Natural killer cell (primary cell): ENCODE measurements at regions of chr16 and their contacts with region 1.

Region 1: GRCh38 chr16:66275775-66276428 is 90.6 kb upstream of the CDH5 start:
- DNase-seq: peak in 1 of 2 donors; percentile 33
- ATAC-seq: no peak
- H3K4me3 ChIP-seq: no peak overlapping the region
- H3K4me3 Mint-ChIP-seq: no peak overlapping the region
- H3K27ac ChIP-seq: no peak overlapping the region
- H3K27ac Mint-ChIP-seq: no peak overlapping the region
- H3K4me1 ChIP-seq: no peaks in the 10 kb centered on the region
- H3K4me1 Mint-ChIP-seq: peaks cover 0 to 13% of the 10 kb centered on the region in 2 donors
- H3K27me3 ChIP-seq: peaks cover 5% of the 10 kb centered on the region
- H3K27me3 Mint-ChIP-seq: peaks cover 30 to 38% of the 10 kb centered on the region in 2 donors
- CTCF ChIP-seq: peak; percentile 17

Region 2: GRCh38 chr16:66315210-66315825 is 39.4 kb after region 1 on chr16:
- intact Hi-C with region 1: loop called (anchors 1 kb)
- DNase-seq: peak; percentile 23 to 74
- ATAC-seq: peak; percentile 82 to 96 (median 82)
- H3K4me3 ChIP-seq: no peak overlapping the region
- H3K4me3 Mint-ChIP-seq: no peak overlapping the region
- H3K27ac ChIP-seq: no peak overlapping the region
- H3K27ac Mint-ChIP-seq: no peak overlapping the region
- H3K4me1 ChIP-seq: no peaks in the 10 kb centered on the region
- H3K4me1 Mint-ChIP-seq: no peaks in the 10 kb centered on the region
- H3K27me3 ChIP-seq: no peaks in the 10 kb centered on the region
- H3K27me3 Mint-ChIP-seq: peaks cover 7 to 15% of the 10 kb centered on the region in 2 donors
- CTCF ChIP-seq: peak; percentile 98